ENCODE measurements at regions of chr6 and their contacts with region 1.

Region 1: GRCh38 chr6:89585154-89585553 is 53.4 kb downstream of the LYRM2 start:
- DNase-seq: no peak
- ATAC-seq: no peak
- H3K4me3 ChIP-seq: no peak overlapping the region
- H3K27ac ChIP-seq: no peak overlapping the region
- H3K4me1 ChIP-seq: no peaks in the 10 kb centered on the region
- H3K27me3 ChIP-seq: no peaks in the 10 kb centered on the region
- CTCF ChIP-seq: no peak
- EP300 ChIP-seq: no peak
- POLR2A ChIP-seq: no peak
- RAD21 ChIP-seq: no peak

Region 2: GRCh38 chr6:89803271-89803670 is 218.1 kb after region 1 on chr6:
- CTCF ChIA-PET with region 1: no interaction called
- POLR2A ChIA-PET with region 1: interaction called, 10 read pairs
- RAD21 ChIA-PET with region 1: no interaction called
- SMC1A ChIA-PET with region 1: no interaction called
- in situ Hi-C with region 1: no loop called
- intact Hi-C with region 1: no loop called
- DNase-seq: no peak
- ATAC-seq: no peak
- H3K4me3 ChIP-seq: no peak overlapping the region
- H3K27ac ChIP-seq: no peak overlapping the region
- H3K4me1 ChIP-seq: no peaks in the 10 kb centered on the region
- H3K27me3 ChIP-seq: no peaks in the 10 kb centered on the region
- CTCF ChIP-seq: no peak
- EP300 ChIP-seq: no peak
- POLR2A ChIP-seq: no peak
- RAD21 ChIP-seq: no peak

Measured in GM12878 (cell line).